ENCODE measurements at regions of chr19 and their contacts with region 1.

Region 1: GRCh38 chr19:47256688-47257443 is 541 bp downstream of the CCDC9 start:
- DNase-seq: peak; percentile 85 to 99 (median 95)
- ATAC-seq: peak; percentile 74 to 86 (median 80)
- H3K4me3 ChIP-seq: peak overlapping the region; percentile 49 to 67
- H3K4me3 Mint-ChIP-seq: peak overlapping the region; percentile 84 to 91 (median 87)
- H3K27ac ChIP-seq: peak overlapping the region; percentile 95
- H3K27ac Mint-ChIP-seq: peak overlapping the region; percentile 91 to 96
- H3K4me1 ChIP-seq: peaks cover 6 to 40% of the 10 kb centered on the region in 2 experiments
- H3K4me1 Mint-ChIP-seq: peaks cover 31 to 43% (median 42%) of the 10 kb centered on the region in 3 donors
- H3K27me3 ChIP-seq: no peaks in the 10 kb centered on the region
- H3K27me3 Mint-ChIP-seq: no peaks in the 10 kb centered on the region

Region 2: DNA sequence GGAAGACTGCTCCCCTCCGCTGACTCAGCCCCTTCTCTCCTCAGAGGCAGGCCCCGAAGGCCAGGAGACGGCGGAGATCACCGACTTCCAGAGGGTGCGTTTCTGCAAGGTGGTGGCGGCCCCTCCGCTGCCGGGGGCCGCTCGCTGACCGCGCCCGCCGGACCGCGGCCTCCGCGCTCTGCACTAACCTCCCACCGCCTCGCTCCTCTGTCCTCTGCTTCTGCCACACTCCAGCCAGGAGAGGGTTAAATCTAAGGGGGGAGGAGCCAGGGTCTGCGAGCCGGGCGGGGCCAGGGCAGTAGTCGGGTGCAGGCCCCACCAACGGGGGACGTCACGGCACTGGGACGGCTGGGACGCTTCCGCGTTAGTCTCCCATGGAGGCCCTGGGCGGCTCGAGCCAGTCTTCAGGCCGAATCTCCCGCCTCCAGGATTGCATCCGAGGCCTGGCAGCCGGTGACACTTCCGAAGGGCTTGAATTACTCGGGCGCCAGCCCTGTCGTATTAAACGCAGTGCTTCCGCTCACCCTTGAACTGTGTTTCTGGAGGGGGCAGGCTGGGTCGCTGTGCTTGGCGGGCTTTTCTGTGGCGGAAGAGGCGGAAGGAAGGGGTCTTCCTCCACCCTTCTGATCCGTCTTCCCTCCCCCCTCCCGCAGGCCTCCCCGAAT is 16.6 kb after region 1 on chr19:
- CTCF ChIA-PET with region 1: interaction called in 1 of 2 experiments, 12 read pairs
- POLR2A ChIA-PET with region 1: interaction called, 4 to 6 read pairs
- DNase-seq: peak; percentile 76 to 91 (median 85)
- ATAC-seq: peak; percentile 68 to 71 (median 69)
- H3K4me3 ChIP-seq: peak overlapping the region; percentile 78 to 99
- H3K4me3 Mint-ChIP-seq: peak overlapping the region; percentile 95 to 97 (median 96)
- H3K27ac ChIP-seq: peak overlapping the region; percentile 98
- H3K27ac Mint-ChIP-seq: peak overlapping the region; percentile 97 to 98
- H3K4me1 ChIP-seq: peaks cover 0 to 26% of the 10 kb centered on the region in 2 experiments
- H3K4me1 Mint-ChIP-seq: peaks cover 18 to 19% (median 18%) of the 10 kb centered on the region in 3 donors
- H3K27me3 ChIP-seq: no peaks in the 10 kb centered on the region
- H3K27me3 Mint-ChIP-seq: no peaks in the 10 kb centered on the region

Measured in T-cell (primary cell).